PC-3 (cell line): ENCODE measurements at regions of chr10 and their contacts with region 1.

Region 1: GRCh38 chr10:20970708-20971107 is 73.6 kb upstream of the NEBL start:
- DNase-seq: no peak
- ATAC-seq: no peak
- H3K4me3 ChIP-seq: no peak overlapping the region
- H3K27ac ChIP-seq: no peak overlapping the region
- H3K4me1 ChIP-seq: peaks cover 7% of the 10 kb centered on the region; the same call in 1 of the 2 replicates
- H3K27me3 ChIP-seq: no peaks in the 10 kb centered on the region
- CTCF ChIP-seq: no peak

Region 2: GRCh38 chr10:20936396-20936795 is 34.3 kb before region 1 on chr10:
- CTCF ChIA-PET with region 1: no interaction called
- POLR2A ChIA-PET with region 1: no interaction called
- intact Hi-C with region 1: loop called (anchors 5 kb)
- DNase-seq: no peak
- ATAC-seq: peak; percentile 49
- H3K4me3 ChIP-seq: no peak overlapping the region
- H3K27ac ChIP-seq: peak overlapping the region; percentile 81
- H3K4me1 ChIP-seq: peaks cover 19% of the 10 kb centered on the region
- H3K27me3 ChIP-seq: no peaks in the 10 kb centered on the region
- CTCF ChIP-seq: no peak

Region 3: DNA sequence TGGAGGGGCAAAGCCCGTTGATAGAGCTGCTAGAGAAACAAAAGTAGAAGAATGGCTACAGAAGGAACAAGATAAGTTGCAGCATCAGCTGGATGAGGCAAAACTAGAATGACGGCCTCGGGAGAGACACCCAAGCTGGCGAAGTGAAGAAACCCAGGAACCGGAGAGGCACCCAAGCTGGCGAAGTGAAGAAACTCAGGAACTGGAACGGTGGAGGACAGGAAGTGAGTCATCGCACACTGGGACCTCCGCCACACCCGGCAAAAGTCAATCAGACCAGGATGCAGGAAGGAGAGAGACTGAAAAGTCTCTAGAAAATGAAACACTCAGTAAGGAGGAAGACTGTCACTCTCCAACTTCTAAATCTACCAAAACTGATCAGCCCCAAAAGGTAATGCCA is 59.4 kb after region 1 on chr10:
- CTCF ChIA-PET with region 1: no interaction called
- POLR2A ChIA-PET with region 1: no interaction called
- intact Hi-C with region 1: no loop called
- DNase-seq: peak; percentile 52
- ATAC-seq: no peak
- H3K4me3 ChIP-seq: no peak overlapping the region
- H3K27ac ChIP-seq: peak overlapping the region; percentile 45
- H3K4me1 ChIP-seq: peaks cover 6% of the 10 kb centered on the region; the same call in 1 of the 2 replicates
- H3K27me3 ChIP-seq: no peaks in the 10 kb centered on the region
- CTCF ChIP-seq: no peak